Caco-2 (cell line): ENCODE measurements at regions of chr12 and their contacts with region 1.

Region 1: DNA sequence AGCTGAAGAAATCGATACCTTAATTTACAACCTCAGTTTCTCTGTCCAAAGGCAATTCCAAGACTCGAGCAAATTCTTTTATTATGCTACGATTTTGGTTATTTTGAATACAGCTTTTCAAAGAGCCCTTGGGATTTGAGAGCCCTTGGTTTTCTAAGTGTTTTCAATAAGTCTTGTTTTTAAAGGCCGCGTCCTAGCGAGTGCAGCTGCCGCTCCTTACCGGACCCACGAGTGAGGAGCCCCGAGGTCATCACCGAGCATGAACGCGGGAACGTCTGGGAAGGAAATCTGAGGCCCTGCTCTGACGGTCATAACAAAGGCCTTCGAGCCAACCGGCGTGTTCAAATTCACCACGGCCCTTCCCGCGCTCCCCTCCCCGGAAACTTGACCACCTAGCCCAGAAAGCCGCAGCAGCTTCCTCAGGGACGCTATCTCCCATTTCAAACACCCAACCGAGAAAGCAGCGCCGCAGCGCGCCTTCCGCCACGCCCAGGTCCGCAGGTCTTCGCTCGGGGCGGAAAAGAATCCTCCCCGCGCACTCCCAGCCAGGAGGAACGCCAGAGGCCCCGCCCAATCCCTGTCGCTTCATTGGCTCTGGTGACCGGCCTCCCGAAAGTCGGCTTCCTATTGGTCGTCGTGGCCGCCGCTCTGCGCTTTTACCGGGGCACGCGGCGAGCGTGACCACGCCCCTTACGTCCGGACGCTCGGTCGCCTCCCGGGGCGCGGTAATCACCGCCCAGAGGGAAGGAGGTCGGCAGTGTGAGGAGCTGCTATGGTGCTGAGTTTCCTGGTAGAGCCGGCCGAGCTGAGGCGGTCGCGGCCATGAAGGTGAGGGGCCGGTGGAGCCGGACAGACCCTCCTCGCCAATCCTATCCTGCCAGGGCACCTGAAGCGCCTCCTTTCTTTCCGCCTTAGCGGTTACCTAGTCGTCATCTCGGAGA is at the start of gene RNF34:
- DNase-seq: peak; percentile 99
- H3K4me3 ChIP-seq: peak within 1 kb of the TSS; percentile 99
- H3K4me3 Mint-ChIP-seq: peak within 1 kb of the TSS; percentile 90
- H3K27ac Mint-ChIP-seq: peak within 1 kb of the TSS; percentile 75
- H3K4me1 ChIP-seq: no peaks in the 10 kb centered on the region
- H3K4me1 Mint-ChIP-seq: peaks cover 13% of the 10 kb centered on the region
- H3K27me3 ChIP-seq: no peaks in the 10 kb centered on the region
- H3K27me3 Mint-ChIP-seq: no peaks in the 10 kb centered on the region
- CTCF ChIP-seq: no peak
- total RNA-seq, gene RNF34: 50.5 and 54.1 TPM in 2 replicates

Region 2: GRCh38 chr12:121351820-121352681 is 47.6 kb before region 1 on chr12 and contains the start of gene ANAPC5:
- CTCF ChIA-PET with region 1: interaction called, 7 read pairs
- POLR2A ChIA-PET with region 1: interaction called, 41 read pairs
- intact Hi-C with region 1: loop called (anchors 1 kb)
- DNase-seq: peak; percentile 95 to 99
- H3K4me3 ChIP-seq: peak within 1 kb of the TSS; percentile 68
- H3K4me3 Mint-ChIP-seq: peak within 1 kb of the TSS; percentile 95
- H3K27ac Mint-ChIP-seq: peak within 1 kb of the TSS; percentile 98
- H3K4me1 ChIP-seq: no peaks in the 10 kb centered on the region
- H3K4me1 Mint-ChIP-seq: peaks cover 8% of the 10 kb centered on the region
- H3K27me3 ChIP-seq: no peaks in the 10 kb centered on the region
- H3K27me3 Mint-ChIP-seq: no peaks in the 10 kb centered on the region
- CTCF ChIP-seq: no peak
- total RNA-seq, gene ANAPC5: 106 and 115 TPM in 2 replicates